ENCODE measurements at regions of chrX and their contacts with region 1.

Region 1: DNA sequence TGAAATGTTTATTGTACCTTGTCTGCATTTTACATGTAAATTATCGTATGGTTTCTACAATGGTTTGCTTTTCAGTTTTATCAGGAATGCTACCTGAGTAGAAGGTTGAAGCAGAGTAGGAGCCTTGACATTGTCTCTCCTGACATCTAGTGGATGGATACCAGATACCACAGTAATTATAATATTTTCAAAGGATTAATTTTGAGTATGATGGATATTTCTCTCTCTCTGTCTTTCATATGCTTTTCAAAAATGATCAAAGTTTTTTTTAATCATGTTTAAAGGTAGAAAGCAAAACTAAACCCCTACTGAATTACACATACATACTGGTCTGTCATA is 109.4 kb upstream of the KLHL13 start:
- DNase-seq: no peak
- H3K4me3 ChIP-seq: peak overlapping the region in 2 of 3 experiments; percentile 2 to 8
- H3K27ac ChIP-seq: peak overlapping the region; percentile 70
- H3K4me1 ChIP-seq: peaks cover 5% of the 10 kb centered on the region
- H3K27me3 ChIP-seq: no peaks in the 10 kb centered on the region
- CTCF ChIP-seq: peak; percentile 51 to 68

Region 2: DNA sequence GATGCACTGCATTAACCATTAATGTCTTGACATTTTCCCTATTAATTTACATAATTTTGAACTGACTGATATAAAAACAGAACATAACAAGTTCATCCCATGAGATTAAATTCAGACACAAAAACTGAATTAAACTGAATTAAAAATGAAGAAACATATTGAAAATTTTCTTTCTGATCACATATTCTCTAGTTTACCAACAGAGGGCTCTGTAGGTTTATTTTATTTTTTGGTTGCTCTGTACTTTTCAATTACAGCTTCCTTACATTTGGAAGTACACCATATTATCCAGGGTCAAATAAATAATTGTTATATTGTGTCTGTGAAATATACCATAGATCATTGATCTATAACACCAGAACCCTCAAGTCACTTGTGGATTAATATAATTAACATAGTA is 1736.0 kb before region 1 on chrX:
- CTCF ChIA-PET with region 1: no interaction called
- dilution Hi-C with region 1: no loop called
- in situ Hi-C with region 1: loop called in 1 of 2 experiments (anchors 25 kb)
- intact Hi-C with region 1: no loop called
- DNase-seq: no peak
- H3K4me3 ChIP-seq: no peak overlapping the region
- H3K27ac ChIP-seq: no peak overlapping the region
- H3K4me1 ChIP-seq: no peaks in the 10 kb centered on the region
- H3K27me3 ChIP-seq: no peaks in the 10 kb centered on the region
- CTCF ChIP-seq: peak; percentile 39 to 45

Region 3: GRCh38 chrX:116749943-116750342 is 1476.1 kb before region 1 on chrX:
- CTCF ChIA-PET with region 1: no interaction called
- dilution Hi-C with region 1: no loop called
- in situ Hi-C with region 1: no loop called
- intact Hi-C with region 1: loop called (anchors 10 kb)
- DNase-seq: peak; percentile 84
- H3K4me3 ChIP-seq: no peak overlapping the region
- H3K27ac ChIP-seq: no peak overlapping the region
- H3K4me1 ChIP-seq: peaks cover 5% of the 10 kb centered on the region
- H3K27me3 ChIP-seq: no peaks in the 10 kb centered on the region
- CTCF ChIP-seq: peak; percentile 2 to 34

Region 4: GRCh38 chrX:117743469-117744251 is 482.4 kb before region 1 on chrX:
- CTCF ChIA-PET with region 1: no interaction called
- dilution Hi-C with region 1: no loop called
- in situ Hi-C with region 1: no loop called
- intact Hi-C with region 1: loop called (anchors 5 kb)
- DNase-seq: peak; percentile 14
- H3K4me3 ChIP-seq: no peak overlapping the region
- H3K27ac ChIP-seq: no peak overlapping the region
- H3K4me1 ChIP-seq: no peaks in the 10 kb centered on the region
- H3K27me3 ChIP-seq: no peaks in the 10 kb centered on the region
- CTCF ChIP-seq: peak; percentile 63 to 81

Region 5: GRCh38 chrX:117996918-117997480 is 229.1 kb before region 1 on chrX:
- CTCF ChIA-PET with region 1: interaction called, 6 read pairs
- dilution Hi-C with region 1: no loop called
- in situ Hi-C with region 1: loop called (anchors 10 kb)
- intact Hi-C with region 1: loop called (anchors 1 kb)
- DNase-seq: peak; percentile 67
- H3K4me3 ChIP-seq: peak overlapping the region in 2 of 3 experiments; percentile 26 to 29
- H3K27ac ChIP-seq: peak overlapping the region; percentile 50
- H3K4me1 ChIP-seq: peaks cover 28% of the 10 kb centered on the region
- H3K27me3 ChIP-seq: no peaks in the 10 kb centered on the region
- CTCF ChIP-seq: peak; percentile 83 to 93

Region 6: GRCh38 chrX:118025226-118025625 is 200.8 kb before region 1 on chrX:
- CTCF ChIA-PET with region 1: no interaction called
- dilution Hi-C with region 1: no loop called
- in situ Hi-C with region 1: no loop called
- intact Hi-C with region 1: no loop called
- DNase-seq: no peak
- H3K4me3 ChIP-seq: no peak overlapping the region
- H3K27ac ChIP-seq: no peak overlapping the region
- H3K4me1 ChIP-seq: no peaks in the 10 kb centered on the region
- H3K27me3 ChIP-seq: no peaks in the 10 kb centered on the region
- CTCF ChIP-seq: no peak

Region 7: GRCh38 chrX:118116713-118117550 is 109.1 kb before region 1 on chrX and contains the start of gene KLHL13:
- CTCF ChIA-PET with region 1: no interaction called
- dilution Hi-C with region 1: no loop called
- in situ Hi-C with region 1: no loop called
- intact Hi-C with region 1: loop called (anchors 2 kb)
- DNase-seq: peak; percentile 28
- H3K4me3 ChIP-seq: peak within 1 kb of the TSS; percentile 54 to 72 (median 71)
- H3K27ac ChIP-seq: peak within 1 kb of the TSS; percentile 40
- H3K4me1 ChIP-seq: peaks cover 7% of the 10 kb centered on the region
- H3K27me3 ChIP-seq: peaks cover 2% of the 10 kb centered on the region
- CTCF ChIP-seq: no peak
- total RNA-seq, gene KLHL13: 8.7 to 23.0 TPM

Region 8: DNA sequence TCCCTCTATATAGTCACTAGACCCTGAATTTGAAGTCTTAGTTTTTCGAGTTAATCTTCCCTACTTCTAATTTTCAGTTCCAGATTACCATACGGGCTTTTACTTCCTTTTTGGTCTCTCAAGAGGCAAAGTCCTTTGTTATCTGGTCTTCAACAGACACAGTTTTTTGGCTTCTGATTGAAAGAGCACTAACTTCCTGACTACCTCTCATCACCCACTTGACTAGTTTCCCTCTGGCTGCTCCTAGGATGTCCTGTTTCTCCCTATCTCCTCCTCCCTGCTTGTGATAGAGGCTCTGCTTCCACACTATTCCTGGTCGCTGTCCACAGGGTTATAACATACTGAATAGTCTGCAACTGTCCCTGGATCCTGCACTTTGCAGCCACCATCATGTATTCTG is 103.1 kb after region 1 on chrX:
- CTCF ChIA-PET with region 1: no interaction called
- dilution Hi-C with region 1: no loop called
- in situ Hi-C with region 1: no loop called
- intact Hi-C with region 1: no loop called
- DNase-seq: no peak
- H3K4me3 ChIP-seq: no peak overlapping the region
- H3K27ac ChIP-seq: no peak overlapping the region
- H3K4me1 ChIP-seq: no peaks in the 10 kb centered on the region
- H3K27me3 ChIP-seq: no peaks in the 10 kb centered on the region
- CTCF ChIP-seq: no peak